ENCODE measurements at regions of chr2 and their contacts with region 1.

Region 1: DNA sequence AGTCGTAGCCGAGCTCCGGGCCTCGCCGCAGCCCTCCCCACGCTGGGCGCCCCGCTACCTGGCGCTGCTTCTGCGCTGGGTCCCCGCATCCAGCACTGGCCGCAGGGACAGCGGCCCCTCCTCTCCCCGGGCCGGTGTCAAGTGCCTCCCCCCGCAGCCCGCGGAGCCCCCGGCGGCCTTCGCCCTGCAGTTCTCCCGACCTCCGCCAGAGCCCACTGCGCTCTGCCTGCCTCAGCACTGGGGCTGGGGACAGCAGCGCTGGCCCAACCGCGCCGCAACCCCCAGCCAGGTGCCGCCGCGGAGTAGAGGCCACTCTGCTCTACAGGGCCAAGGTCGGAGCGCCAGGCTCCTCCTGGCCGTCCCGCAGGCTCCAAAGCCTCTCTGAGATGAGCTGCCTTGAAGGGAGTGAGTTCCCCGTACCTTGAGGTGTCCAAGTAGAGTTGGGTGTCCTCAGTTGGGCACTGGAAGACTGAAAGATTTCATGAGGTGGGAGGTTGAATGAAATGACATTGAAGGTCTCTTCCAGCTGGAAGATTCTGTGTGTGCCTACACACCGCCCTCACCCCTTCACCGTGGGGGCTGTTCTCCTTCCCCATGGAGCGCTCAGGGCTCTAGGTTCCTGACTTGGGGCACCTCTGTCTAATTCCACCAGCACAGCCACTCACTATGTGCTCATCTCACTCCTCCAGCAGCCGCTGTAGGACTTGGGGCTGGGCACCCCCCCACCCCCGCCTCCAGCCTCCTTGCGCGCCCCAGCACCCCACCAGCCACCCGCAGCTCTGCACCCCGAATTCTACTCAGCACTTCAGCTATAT is 854 bp upstream of the DNMT3A start:
- DNase-seq: peak; percentile 89
- ATAC-seq: peak; percentile 86

Region 2: DNA sequence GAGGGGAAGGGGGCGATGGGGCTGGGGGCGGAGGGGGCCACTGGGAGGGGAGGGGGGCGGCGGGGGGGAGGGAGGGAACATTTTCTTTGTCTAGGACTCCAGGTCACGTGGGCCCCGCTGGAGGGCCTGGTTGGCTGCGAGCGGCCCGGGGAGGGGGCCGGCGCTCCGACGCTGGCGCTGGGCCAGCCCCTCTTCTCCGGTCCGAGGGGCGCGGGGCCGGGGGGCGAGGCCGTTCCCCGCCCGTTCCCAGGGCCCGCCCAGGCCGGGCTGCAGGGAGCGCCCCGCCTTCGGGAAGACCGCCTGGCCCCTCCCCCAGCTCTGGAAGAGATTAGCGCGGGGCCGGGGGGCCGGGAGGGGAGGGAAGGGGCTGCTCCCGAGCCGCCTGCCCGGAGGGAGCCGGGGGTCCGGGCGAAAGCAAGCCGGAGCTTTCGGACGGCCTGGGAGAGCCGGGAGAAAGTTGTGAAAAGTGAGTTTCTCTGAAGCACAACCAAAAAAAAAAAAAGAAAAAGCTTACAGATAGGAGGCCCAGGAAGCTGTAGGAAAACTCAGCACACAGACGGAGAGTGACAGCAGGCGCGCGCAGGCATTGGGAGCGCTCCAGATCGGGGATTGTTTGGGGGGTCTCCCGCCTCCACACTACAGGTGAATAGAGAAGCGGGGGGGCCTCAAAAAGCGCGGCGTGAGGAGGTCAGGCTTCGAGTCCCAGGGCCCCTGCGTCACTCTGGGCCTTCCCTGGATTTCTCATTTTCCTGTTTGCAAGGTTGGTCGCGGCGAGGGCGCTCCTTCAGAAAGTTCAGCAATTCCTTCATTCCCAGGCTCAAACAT is 90.1 kb before region 1 on chr2:
- intact Hi-C with region 1: loop called (anchors 5 kb)
- DNase-seq: peak; percentile 82
- ATAC-seq: peak; percentile 55

Region 3: DNA sequence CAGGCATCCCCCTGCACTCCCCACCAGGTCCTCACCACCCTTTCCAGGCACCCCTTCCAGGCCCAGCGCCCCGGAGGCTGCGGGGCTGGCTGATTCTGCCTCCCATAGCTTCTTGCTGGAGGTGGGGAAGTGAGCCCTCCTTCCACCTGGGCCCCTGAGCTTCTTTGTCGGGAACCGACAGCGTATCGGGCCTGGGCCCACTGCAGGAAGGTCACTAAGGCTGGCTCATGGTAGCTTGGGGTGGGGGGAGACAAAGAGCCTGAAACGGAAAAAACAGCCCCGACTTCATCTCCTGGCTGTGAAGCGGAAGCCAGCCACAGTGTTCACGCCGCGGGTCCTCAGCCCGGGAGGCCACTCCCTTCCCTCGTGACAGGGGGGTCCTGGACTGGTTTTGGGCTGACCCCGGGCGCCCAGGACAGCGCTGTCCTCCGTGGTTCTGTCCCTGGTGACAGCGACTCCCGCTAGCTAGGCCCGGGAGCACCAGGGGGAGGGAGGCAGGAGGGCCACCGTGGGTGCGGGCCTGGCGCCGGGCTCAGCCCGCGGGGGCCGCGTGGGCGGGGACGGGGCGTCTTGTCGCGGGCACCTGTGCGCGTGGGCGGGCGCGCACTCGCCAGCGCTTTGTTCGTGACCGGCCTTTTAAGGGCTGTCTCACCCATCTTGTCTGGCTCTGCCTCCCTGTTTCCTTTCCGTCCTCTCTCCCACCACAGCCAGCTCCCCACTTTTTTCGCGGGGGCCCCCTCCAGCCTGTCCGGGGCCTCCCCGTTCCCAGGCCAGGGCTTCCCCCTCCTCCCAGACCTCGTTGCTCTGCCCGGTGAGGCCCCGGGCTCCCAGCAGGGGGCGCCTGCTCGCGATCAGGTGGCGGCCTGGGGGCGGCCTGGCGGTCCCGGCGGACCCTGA is 65.8 kb before region 1 on chr2:
- intact Hi-C with region 1: loop called (anchors 5 kb)
- DNase-seq: peak; percentile 82
- ATAC-seq: peak; percentile 26

Region 4: GRCh38 chr2:25294573-25295462 is 47.8 kb before region 1 on chr2:
- intact Hi-C with region 1: loop called (anchors 5 kb)
- DNase-seq: peak; percentile 92
- ATAC-seq: peak; percentile 90

Region 5: DNA sequence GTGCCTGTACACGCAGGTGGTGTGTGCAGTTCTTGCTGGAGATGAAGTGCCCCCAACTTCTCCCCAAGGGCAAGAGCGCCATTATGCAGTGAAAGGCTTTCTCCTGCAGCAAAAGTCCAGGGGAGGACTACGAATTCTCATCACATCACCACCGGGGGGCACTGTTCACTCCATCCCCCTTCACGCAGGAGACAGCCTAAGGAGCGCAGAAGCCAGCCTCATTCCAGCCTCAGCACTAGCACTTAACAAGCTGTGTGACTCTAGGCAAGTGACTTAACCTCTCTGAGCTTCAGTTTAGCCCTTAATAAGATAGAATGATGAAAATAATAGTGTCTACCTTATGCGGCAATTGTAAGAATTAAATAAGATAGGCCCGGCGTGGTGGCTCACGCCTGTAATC is 33.2 kb before region 1 on chr2:
- intact Hi-C with region 1: loop called (anchors 5 kb)
- DNase-seq: no peak
- ATAC-seq: no peak

Region 6: GRCh38 chr2:25376750-25377621 is 34.4 kb after region 1 on chr2:
- intact Hi-C with region 1: loop called (anchors 1 kb)
- DNase-seq: peak; percentile 90
- ATAC-seq: peak; percentile 98